ENCODE measurements at regions of chr12 and their contacts with region 1.

Region 1: GRCh38 chr12:6927379-6928024 is at the start of gene ATN1:
- DNase-seq: peak; percentile 89 to 91 (median 90)
- ATAC-seq: peak; percentile 23 to 65 (median 60)
- H3K4me3 ChIP-seq: peak within 1 kb of the TSS; percentile 67 to 98 (median 83)
- H3K27ac ChIP-seq: peak within 1 kb of the TSS; percentile 87 to 98 (median 96)
- H3K4me1 ChIP-seq: peaks cover 12 to 79% (median 58%) of the 10 kb centered on the region in 12 donors
- H3K27me3 ChIP-seq: no peaks in the 10 kb centered on the region
- CTCF ChIP-seq: no peak
- POLR2A ChIP-seq: peak in 1 of 2 donors; percentile 38
- total RNA-seq, gene ATN1: 38.4 to 82.9 (median 67.2) TPM

Region 2: DNA sequence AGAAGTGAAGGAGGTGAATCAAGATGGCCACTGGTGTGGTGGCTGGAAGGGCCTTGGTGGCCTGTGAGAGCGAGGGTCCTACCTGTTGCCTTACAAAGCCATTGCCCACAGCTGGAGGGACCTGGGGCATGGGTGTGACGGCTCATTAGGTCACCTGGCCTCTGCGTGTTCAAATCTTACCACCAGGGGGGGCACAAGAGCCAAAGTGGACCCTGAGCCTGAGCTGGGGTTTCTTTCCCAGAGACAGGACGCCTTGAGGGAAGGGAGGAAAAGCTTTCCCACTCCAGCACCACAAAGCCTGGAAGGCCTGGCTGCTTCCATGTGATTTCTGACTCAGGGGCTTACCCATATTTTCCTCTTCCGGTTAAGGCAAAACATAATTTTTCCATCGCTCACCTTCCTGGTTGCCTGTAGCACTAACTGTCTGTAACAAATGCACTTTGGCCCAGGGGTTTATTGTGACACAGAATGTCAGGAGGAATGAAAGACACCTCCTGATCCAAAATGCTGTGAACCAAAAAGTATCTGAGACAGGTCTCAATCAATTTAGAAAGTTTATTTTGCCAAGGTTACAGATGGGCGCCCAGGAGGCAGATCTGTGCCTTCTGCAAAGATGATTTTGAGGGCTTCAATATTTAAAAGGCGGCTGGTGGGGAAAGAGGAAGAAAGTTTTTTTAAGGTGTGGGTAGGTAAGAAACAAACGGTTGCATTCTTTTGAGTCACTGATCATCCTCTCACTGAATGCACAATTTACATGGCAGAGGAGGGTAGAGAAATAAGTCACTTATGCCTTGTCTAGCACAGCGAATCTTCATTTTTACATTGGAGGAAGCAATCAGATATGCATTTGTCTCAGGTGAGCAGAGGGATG is 731.6 kb before region 1 on chr12:
- intact Hi-C with region 1: no loop called
- DNase-seq: peak; percentile 80 to 88 (median 88)
- ATAC-seq: peak; percentile 78 to 85 (median 81)
- H3K4me3 ChIP-seq: no peak overlapping the region
- H3K27ac ChIP-seq: peak overlapping the region; percentile 24 to 80 (median 52)
- H3K4me1 ChIP-seq: peaks cover 0 to 36% (median 13%) of the 10 kb centered on the region in 12 donors
- H3K27me3 ChIP-seq: peaks cover 0 to 12% (median 0%) of the 10 kb centered on the region in 9 donors
- CTCF ChIP-seq: peak; percentile 90 to 96 (median 94)
- POLR2A ChIP-seq: no peak

Region 3: GRCh38 chr12:6662906-6663742 is 264.4 kb before region 1 on chr12 and contains the start of gene ING4:
- intact Hi-C with region 1: no loop called
- DNase-seq: peak; percentile 97 to 99 (median 98)
- ATAC-seq: peak; percentile 99 to 100 (median 100)
- H3K4me3 ChIP-seq: peak within 1 kb of the TSS; percentile 40 to 86 (median 74)
- H3K27ac ChIP-seq: peak within 1 kb of the TSS; percentile 51 to 90 (median 78)
- H3K4me1 ChIP-seq: peaks cover 0 to 24% (median 12%) of the 10 kb centered on the region in 12 donors
- H3K27me3 ChIP-seq: no peaks in the 10 kb centered on the region
- CTCF ChIP-seq: no peak
- POLR2A ChIP-seq: no peak
- total RNA-seq, gene ING4: 17.4 to 39.0 (median 24.7) TPM

Region 4: GRCh38 chr12:6884539-6884938 is 43.0 kb before region 1 on chr12:
- intact Hi-C with region 1: no loop called
- DNase-seq: no peak
- ATAC-seq: peak in 1 of 4 donors; percentile 25
- H3K4me3 ChIP-seq: no peak overlapping the region
- H3K27ac ChIP-seq: no peak overlapping the region
- H3K4me1 ChIP-seq: no peaks in the 10 kb centered on the region
- H3K27me3 ChIP-seq: no peaks in the 10 kb centered on the region
- CTCF ChIP-seq: no peak
- POLR2A ChIP-seq: no peak

Region 5: DNA sequence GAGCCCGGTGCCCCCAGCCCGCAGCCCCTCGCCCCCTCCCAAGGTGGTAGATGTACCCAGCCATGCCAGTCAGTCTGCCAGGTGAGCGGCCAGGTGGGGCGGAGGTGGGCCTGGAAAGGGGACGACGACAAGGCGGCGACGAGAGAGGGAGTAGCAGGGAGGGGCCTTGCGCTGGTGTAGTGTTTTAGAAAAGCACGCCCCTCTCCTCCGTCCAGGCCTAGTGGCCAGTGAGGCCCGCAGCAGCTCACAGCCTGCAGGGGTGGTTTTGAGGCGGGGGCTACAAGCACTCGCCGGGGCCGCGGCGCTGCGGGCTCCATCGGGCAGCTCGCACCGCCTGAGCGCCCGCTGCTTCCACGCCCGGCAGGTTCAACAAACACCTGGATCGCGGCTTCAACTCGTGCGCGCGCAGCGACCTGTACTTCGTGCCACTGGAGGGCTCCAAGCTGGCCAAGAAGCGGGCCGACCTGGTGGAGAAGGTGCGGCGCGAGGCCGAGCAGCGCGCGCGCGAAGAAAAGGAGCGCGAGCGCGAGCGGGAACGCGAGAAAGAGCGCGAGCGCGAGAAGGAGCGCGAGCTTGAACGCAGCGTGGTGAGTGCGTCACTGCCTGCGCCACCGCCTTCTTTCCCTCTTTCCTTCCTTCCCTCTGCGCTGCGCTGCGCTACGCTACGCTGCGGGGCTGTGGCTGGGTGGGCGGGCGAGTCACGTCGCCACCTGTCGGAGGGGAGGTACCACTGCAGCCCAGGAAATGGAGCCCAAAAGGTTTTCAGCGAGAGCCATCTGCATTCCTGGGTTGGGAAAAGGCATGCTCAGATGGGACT is 10.2 kb after region 1 on chr12:
- intact Hi-C with region 1: loop called in 2 of 10 experiments (anchors 2 kb)
- DNase-seq: peak; percentile 93 to 96 (median 95)
- ATAC-seq: peak; percentile 87 to 91 (median 88)
- H3K4me3 ChIP-seq: peak overlapping the region; percentile 27 to 88 (median 73)
- H3K27ac ChIP-seq: peak overlapping the region; percentile 86 to 98 (median 94)
- H3K4me1 ChIP-seq: peaks cover 3 to 82% (median 51%) of the 10 kb centered on the region in 12 donors
- H3K27me3 ChIP-seq: no peaks in the 10 kb centered on the region
- CTCF ChIP-seq: peak; percentile 89 to 100 (median 96)
- POLR2A ChIP-seq: peak in 1 of 2 donors; percentile 79